ENCODE measurements at regions of chrX and their contacts with region 1.

Region 1: DNA sequence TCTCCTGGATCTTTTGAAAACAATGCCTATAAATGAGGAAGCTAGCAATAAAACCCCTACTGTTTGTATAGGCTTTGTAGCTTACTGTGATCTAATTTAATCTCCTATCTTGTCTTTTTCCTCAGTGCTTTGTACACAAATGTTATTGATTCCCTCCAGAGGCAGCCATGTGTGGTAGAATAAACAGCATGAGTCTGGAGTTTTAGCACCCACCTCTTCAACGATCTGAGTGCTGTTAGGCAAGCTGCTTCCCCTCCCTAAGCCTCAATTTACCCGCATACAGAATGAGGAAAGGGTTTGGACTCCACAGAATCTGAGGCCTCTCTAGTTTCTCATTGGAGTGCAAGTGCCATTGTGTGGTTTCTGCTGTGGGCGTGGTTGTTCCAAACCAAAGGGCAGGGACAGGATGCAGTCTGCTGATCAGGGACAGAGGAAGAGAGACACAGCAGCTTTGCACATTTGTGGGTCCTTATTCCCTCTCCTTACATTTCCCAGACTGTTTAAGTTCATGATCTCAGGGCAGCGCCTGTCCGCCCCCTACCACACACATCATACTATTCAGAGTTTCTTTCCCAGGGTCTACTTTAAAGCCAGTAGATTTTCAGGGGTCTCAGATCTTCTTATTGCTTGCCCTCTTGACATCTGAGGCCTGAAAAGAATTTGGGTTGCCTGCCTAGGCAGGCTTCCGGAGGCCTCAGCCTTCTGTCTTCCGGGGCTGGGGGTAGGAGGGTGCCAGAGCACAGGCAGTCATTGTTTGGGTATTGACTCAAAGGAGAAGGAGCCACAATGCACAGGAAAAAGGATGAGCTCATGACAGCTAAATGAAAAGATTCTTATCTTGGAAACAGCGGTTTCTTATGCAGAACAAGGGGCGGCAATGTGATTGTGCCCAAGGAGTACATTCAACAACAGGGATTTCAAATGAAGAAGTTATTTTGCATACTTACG is 114.9 kb upstream of the TEX13D start:
- DNase-seq: peak; percentile 69
- H3K4me3 Mint-ChIP-seq: peak overlapping the region; percentile 72
- H3K27ac Mint-ChIP-seq: peak overlapping the region; percentile 96
- H3K4me1 Mint-ChIP-seq: peaks cover 80% of the 10 kb centered on the region
- H3K27me3 Mint-ChIP-seq: no peaks in the 10 kb centered on the region

Region 2: DNA sequence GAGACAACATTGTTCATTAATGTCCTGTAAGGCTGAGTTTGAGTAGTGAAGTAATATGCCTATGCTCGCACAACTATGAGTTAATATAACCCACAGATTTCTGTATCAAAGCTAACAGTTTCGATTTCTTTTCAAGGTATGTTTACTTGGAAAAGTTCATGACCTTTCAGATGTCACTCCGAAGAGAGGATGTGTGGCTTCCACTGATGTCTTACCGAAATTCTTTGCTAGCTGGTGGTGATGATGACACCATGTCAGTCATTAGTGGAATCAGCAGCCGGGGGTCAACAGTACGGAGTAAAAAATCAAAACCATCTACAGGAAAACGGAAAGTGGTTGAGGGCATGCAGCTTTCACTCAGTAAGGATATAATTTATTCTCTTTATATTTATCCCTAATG is 131.2 kb before region 1 on chrX:
- intact Hi-C with region 1: loop called (anchors 2 kb)
- DNase-seq: peak; percentile 29
- H3K4me3 Mint-ChIP-seq: no peak overlapping the region
- H3K27ac Mint-ChIP-seq: peak overlapping the region; percentile 62
- H3K4me1 Mint-ChIP-seq: peaks cover 21% of the 10 kb centered on the region
- H3K27me3 Mint-ChIP-seq: no peaks in the 10 kb centered on the region

Region 3: DNA sequence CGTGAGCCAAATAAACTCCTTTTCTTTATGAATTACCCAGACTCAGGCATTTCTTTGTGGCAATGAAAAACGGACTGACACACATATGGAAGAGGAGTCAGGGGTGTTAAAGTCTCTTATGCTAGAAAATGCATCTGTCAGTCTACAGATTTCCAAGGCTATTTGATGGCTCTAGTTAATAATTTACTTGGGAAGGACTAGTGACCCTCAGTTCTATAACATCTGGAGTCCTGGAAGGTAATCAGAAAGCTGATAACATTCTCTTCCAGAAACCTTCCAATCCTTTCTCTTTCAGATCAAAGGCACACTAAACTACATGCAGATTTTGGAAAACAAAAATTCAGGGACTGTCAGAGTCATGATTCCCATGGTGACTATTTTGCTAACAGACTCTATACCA is 27.1 kb before region 1 on chrX:
- intact Hi-C with region 1: no loop called
- DNase-seq: no peak
- H3K4me3 Mint-ChIP-seq: no peak overlapping the region
- H3K27ac Mint-ChIP-seq: no peak overlapping the region
- H3K4me1 Mint-ChIP-seq: no peaks in the 10 kb centered on the region
- H3K27me3 Mint-ChIP-seq: no peaks in the 10 kb centered on the region

Region 4: GRCh38 chrX:124239911-124240310 is 22.3 kb after region 1 on chrX:
- intact Hi-C with region 1: loop called (anchors 1 kb)
- DNase-seq: peak; percentile 38
- H3K4me3 Mint-ChIP-seq: peak overlapping the region; percentile 58
- H3K27ac Mint-ChIP-seq: peak overlapping the region; percentile 73
- H3K4me1 Mint-ChIP-seq: peaks cover 32% of the 10 kb centered on the region
- H3K27me3 Mint-ChIP-seq: no peaks in the 10 kb centered on the region

Region 5: DNA sequence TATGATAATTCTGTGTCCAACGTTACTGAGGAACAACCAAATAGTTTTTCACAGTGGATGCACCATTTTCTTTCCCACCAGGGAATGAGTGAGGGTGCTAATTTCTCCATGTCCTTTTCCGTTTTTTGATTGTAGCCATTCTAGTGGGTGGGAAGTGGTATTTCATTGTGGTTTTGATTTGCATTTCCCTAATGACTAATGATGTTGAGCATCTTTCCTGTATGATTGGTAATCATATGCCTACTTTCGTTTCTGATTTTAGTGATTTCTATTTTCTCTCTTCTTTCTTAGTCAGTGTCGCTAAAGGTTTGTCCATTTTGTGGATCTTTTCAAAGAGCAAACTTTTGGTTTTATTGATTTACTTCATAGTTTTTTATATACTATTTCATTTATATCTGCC is 82.8 kb after region 1 on chrX:
- intact Hi-C with region 1: loop called (anchors 1 kb)
- DNase-seq: no peak
- H3K4me3 Mint-ChIP-seq: no peak overlapping the region
- H3K27ac Mint-ChIP-seq: peak overlapping the region; percentile 63
- H3K4me1 Mint-ChIP-seq: peaks cover 20% of the 10 kb centered on the region
- H3K27me3 Mint-ChIP-seq: no peaks in the 10 kb centered on the region

Region 6: DNA sequence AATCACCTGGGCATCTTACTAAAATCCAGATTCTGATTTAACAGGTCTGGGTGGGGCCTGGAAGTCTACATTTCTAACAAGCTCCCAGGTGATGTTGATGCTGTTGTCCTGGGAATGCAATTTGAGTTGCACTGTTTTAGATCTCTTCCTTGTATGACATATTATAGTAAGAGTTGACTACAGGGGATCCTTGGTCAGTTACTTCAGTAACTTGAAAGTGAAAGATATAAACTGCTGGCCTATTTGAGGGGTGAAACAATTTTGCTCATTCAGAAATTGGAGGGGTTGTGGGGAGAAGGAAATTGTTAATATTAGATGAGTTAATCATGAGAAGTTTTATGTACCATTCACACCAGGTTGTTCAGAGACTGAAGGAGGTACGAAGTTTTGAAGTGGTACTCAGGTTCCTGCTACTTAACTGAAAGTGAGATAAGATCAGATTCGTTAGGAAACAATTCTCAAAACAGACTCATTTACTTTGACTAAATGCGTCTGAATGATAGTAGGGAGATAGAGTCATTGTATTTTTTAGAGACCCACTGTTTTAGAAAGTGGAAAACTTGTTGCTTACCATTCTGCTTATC is 141.3 kb after region 1 on chrX:
- intact Hi-C with region 1: loop called (anchors 1 kb)
- DNase-seq: no peak
- H3K4me3 Mint-ChIP-seq: peak overlapping the region; percentile 61
- H3K27ac Mint-ChIP-seq: peak overlapping the region; percentile 84
- H3K4me1 Mint-ChIP-seq: peaks cover 51% of the 10 kb centered on the region
- H3K27me3 Mint-ChIP-seq: no peaks in the 10 kb centered on the region

Measured in activated T-helper 2 cell treated with anti-CD3 and anti-CD28 coated beads, Interferon-gamma antibody, Interleukin-2, Interleukin-4, amounts not matched to agents 10 μg/mL and 5 μg/mL and 100 μg/mL, durations not matched to agents 14 hours and 24 hours and 36 hours (primary cell).